GM10248 (cell line): ENCODE measurements at regions of chr1 and their contacts with region 1.

Region 1: GRCh38 chr1:154878371-154879022 is 8.4 kb upstream of the KCNN3 start:
- DNase-seq: peak; percentile 84
- CTCF ChIP-seq: peak; percentile 88

Region 2: GRCh38 chr1:154831462-154831861 is 47.0 kb before region 1 on chr1:
- CTCF ChIA-PET with region 1: no interaction called
- POLR2A ChIA-PET with region 1: no interaction called
- DNase-seq: no peak
- CTCF ChIP-seq: no peak

Region 3: GRCh38 chr1:154891452-154891851 is 13.0 kb after region 1 on chr1:
- CTCF ChIA-PET with region 1: interaction called, 16 read pairs
- POLR2A ChIA-PET with region 1: no interaction called
- DNase-seq: no peak
- CTCF ChIP-seq: no peak

Region 4: GRCh38 chr1:154896771-154897391 is 18.4 kb after region 1 on chr1:
- CTCF ChIA-PET with region 1: interaction called, 16 read pairs
- POLR2A ChIA-PET with region 1: no interaction called
- DNase-seq: no peak
- CTCF ChIP-seq: no peak